Activated T-helper 1 cell treated with anti-CD3 and anti-CD28 coated beads, Interleukin-12 subunit alpha, Interleukin-12 subunit beta, Interleukin-2, Interleukin-4 antibody, amounts not matched to agents 30 ng/mL and 10 ng/mL and 1 ng/mL, durations not matched to agents 14 hours and 24 hours and 36 hours (primary cell): ENCODE measurements at regions of chr21 and their contacts with region 1.

Region 1: DNA sequence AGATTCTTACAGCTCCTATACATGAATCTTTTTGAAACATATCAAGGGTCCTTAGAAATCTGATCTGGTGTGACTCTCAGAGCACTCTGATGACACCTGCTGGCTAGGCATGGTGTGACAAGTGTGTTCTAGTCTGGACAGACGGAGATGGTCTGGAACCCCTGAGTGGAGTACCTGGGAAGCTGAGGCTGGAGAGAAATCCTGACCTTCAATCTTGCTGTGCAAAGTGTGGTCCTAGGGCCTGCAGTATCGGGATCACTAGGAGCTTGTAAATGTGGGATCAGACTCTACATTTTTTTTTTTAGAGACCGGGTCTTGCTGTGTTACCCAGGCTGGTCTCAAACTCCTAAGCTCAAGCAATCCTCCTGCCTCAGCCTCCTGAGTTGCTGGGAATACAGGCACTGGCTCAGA is 78.6 kb upstream of the SOD1 start:
- DNase-seq: peak; percentile 62
- H3K4me3 Mint-ChIP-seq: no peak overlapping the region
- H3K27ac Mint-ChIP-seq: no peak overlapping the region
- H3K4me1 Mint-ChIP-seq: no peaks in the 10 kb centered on the region
- H3K27me3 Mint-ChIP-seq: peaks cover 34% of the 10 kb centered on the region

Region 2: DNA sequence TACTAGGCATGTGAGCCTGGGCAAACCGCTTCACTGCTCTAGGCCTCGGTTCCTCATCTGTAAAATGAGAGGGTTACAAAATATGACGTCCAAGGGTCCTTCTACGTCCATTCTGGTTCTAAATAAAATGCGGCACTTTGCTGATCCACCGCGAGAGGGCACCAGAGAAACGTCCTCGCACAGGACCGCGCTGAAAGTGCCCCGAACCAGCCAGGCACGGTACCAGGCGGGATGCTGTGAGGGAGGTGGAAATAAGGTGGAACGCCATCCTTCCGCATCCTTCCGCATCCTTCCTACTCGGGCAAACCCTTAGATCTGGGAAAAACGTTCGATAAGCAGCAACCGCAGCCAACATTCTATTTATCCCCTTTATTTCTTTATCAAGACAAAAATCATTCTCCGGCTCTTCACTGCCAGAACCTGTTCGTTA is 482.3 kb before region 1 on chr21:
- intact Hi-C with region 1: loop called (anchors 1 kb)
- DNase-seq: peak; percentile 57
- H3K4me3 Mint-ChIP-seq: no peak overlapping the region
- H3K27ac Mint-ChIP-seq: no peak overlapping the region
- H3K4me1 Mint-ChIP-seq: peaks cover 25% of the 10 kb centered on the region
- H3K27me3 Mint-ChIP-seq: peaks cover 17% of the 10 kb centered on the region

Region 3: DNA sequence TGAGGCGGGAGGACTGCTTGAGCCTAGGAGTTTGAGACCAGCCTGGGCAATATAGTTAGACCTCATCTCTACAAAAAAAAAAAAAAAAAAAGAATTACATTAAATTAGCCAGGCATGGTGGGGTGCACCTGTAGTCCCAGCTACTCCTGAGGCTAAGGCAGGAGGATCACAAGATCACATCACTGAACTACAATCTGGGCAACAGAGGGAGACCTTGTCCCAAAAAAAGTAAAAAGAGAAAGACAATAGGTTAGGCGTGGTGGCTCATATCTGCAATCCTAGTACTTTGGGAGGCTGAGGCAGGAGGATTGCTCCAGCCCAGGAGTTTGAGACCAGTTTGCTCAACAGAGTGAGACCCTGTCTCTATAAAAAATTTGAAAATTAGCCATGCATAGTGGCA is 367.1 kb before region 1 on chr21:
- intact Hi-C with region 1: loop called (anchors 1 kb)
- DNase-seq: no peak
- H3K4me3 Mint-ChIP-seq: no peak overlapping the region
- H3K27ac Mint-ChIP-seq: no peak overlapping the region
- H3K4me1 Mint-ChIP-seq: peaks cover 6% of the 10 kb centered on the region
- H3K27me3 Mint-ChIP-seq: no peaks in the 10 kb centered on the region

Region 4: DNA sequence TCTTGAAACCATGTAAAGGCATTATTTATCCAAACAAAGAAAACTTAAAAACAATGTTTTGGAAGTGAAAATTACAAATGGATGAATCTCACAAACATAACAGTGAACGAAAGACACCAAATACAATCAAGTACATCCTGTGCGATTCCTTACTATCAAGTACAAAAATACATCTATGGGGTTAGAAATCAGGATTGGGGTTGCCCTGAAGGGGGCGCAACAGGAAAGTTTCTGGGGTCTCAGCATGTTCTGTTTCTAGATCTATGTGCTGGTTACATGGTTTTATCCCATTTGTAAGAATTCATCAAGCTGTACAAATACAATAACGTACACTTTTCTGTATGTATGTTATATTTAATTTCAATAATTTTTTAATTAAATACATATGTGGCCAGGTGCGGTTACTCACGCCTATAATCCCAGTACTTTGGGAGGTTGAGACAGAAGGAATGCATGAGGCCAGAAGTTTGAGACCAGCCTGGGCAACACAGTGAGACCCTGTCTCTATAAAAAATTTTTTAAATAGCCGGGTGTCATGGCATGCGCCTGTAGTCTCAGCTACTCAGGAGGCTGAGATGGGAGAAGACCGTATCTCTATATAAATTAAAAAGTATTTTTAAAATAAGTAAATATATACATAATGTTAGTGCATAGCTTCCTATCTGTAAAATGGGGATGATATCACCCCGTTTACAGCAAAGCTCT is 42.8 kb before region 1 on chr21:
- intact Hi-C with region 1: loop called (anchors 2 kb)
- DNase-seq: no peak
- H3K4me3 Mint-ChIP-seq: no peak overlapping the region
- H3K27ac Mint-ChIP-seq: no peak overlapping the region
- H3K4me1 Mint-ChIP-seq: no peaks in the 10 kb centered on the region
- H3K27me3 Mint-ChIP-seq: no peaks in the 10 kb centered on the region

Region 5: GRCh38 chr21:31604591-31605190 is 23.8 kb after region 1 on chr21:
- intact Hi-C with region 1: loop called (anchors 1 kb)
- DNase-seq: peak; percentile 39
- H3K4me3 Mint-ChIP-seq: no peak overlapping the region
- H3K27ac Mint-ChIP-seq: no peak overlapping the region
- H3K4me1 Mint-ChIP-seq: peaks cover 7% of the 10 kb centered on the region
- H3K27me3 Mint-ChIP-seq: peaks cover 11% of the 10 kb centered on the region